HEK293 (cell line): ENCODE measurements at regions of chr22 and their contacts with region 1.

Region 1: DNA sequence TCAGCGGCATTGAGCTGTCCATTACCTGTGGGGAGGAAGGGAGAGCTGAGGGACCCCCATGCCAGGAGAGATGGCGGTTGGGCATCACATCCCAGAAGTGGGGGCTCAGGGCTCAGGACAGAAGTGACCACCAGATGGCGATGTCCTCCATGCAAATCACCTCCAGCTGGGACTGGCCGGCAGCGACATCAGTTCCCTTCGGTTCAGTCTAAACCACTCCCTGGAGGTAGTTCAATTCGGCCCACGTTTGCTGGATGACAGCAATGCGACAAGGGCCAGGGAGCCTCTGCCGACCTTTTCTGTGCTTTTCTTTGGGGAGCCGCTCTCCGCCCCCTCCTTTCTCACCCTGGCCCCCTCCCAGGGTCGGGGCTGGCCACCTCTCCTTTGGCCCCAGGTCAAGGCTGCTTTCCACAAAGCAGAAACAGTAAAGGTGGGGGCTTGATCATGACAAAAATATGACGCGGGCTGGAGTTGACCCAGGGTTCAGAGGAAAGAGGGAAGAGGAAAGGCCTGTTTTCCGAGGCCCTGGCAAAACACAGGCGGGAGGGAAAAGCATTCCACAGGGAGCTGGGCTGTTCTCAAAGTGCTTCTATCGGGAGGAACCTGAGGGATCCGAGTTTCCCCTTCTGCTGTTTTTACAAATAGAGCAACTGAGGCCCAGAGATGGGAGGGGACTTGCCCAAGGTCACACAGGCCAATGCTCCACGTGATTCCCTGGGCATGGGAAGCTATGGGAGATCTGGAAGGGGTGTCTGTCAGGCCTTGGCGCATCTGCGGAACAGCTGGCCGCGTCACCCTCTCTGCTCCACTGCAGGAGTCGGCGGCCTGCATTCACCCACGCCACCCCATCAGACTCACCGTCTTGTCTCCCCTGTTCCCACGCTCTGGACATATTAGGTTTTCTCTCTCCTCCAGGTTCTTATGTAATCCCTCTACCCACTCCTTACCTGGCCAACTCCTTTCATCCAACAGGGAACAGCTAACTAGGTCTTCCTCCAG is 54.7 kb downstream of the FBXO7 start:
- H3K4me3 ChIP-seq: no peak overlapping the region
- H3K27ac ChIP-seq: no peak overlapping the region
- H3K4me1 ChIP-seq: peaks cover 5% of the 10 kb centered on the region
- CTCF ChIP-seq: peak; percentile 86

Region 2: DNA sequence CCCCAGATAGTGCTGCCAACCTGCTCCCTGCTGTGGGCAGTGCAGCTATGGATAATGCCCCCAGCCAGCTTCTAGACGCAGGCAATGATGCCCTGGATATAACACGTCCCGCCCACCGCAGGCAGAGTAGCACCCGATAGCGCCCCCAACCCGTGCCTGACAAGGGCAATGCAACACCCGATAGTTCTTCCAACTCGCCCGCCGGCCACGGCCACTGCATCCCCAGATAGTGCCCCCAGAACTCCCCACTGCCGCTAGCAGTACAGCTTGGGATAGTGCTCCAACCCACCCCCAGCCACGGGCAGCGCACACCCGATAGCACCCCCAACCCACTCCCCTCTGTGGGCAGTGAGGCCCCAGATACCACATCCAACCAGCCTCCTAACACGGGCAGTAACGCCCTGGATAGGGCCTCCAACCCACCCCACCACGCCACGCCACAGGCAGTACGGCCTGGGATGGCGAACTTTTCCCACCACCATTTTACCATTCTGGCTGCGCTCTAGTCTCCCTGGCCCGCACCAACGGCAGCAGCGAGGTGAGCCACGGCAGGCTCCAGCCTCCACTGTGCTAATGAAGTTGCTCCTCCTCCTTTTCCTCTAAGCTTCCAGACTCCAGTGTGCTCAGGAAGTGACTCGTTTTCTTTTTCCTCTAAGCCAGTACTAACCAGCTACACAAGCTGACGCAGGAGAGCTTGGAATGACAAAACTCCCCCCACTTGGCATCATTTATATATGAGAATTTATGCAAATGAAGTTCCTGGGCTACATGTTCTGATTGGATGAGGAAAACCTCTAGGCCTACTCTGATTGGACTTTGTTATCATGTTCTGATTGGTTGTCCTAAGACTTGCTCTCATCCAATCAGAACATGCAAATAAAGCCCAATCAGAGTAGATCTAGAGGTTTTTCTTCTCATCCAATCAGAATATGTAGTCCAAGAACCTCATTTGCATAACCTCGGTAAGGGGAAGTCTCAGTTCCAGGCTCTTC is 174.6 kb before region 1 on chr22:
- CTCF ChIA-PET with region 1: no interaction called
- POLR2A ChIA-PET with region 1: no interaction called
- H3K4me3 ChIP-seq: no peak overlapping the region
- H3K27ac ChIP-seq: no peak overlapping the region
- H3K4me1 ChIP-seq: no peaks in the 10 kb centered on the region
- CTCF ChIP-seq: no peak

Region 3: DNA sequence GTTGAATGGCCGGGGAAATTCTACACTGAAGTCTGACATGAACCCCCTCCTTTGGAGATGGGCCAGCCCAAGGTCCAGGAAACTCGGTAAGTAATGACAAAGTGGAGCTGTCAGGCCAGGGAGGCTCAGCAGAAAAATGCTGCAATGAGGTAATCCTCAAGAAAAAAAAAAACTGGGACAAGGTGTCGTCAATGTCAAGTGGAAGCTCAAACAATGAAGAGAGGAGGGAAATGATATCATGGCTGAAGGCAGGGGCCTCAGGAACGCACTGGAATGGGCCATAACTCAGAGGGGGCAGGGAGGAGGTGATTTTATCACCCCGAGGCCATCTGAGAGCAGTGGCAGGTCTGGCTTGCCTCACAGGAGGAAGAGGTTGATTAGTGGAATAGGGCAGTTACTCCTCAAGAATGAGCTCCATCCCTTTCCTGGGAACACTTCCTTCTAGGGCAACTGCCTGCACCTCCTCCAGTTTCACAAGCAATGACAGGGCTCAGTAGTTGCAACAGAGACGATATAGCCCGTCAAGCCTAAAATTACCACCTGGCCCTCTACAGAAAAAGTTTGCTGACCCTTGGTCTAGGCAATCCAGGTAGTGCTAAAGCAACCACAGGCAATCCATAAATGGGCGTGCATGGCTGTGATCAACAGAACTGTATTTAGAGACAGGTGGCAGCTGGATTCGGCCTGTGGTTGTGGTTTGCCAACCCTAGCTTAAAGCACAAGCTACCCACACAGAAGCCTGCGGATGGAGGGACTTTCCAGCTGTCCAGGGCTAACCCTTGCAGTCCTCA is 10.5 kb after region 1 on chr22:
- CTCF ChIA-PET with region 1: interaction called, 21 read pairs
- POLR2A ChIA-PET with region 1: no interaction called
- H3K4me3 ChIP-seq: no peak overlapping the region
- H3K27ac ChIP-seq: no peak overlapping the region
- H3K4me1 ChIP-seq: peaks cover 2% of the 10 kb centered on the region
- CTCF ChIP-seq: no peak

Region 4: DNA sequence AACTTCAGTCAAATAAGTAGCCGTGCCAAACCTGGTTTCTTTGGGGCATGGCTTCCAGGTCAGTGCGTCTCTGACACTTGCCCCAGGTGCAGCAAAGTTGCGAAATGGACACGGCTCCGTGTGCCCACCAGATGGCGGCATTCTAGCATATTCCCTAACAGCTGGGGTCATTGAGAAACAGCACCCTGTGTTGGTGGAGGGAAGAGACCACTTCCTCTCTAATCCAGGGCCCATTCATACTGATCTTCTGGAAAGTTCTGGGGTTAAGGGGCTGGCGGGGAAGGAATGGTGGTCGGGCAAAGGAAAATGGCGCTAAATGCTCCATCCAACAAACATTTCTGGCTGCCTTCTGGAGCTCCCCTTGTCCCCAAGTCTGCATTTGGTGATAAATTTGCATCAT is 131.0 kb after region 1 on chr22:
- CTCF ChIA-PET with region 1: interaction called, 52 read pairs
- POLR2A ChIA-PET with region 1: no interaction called
- H3K4me3 ChIP-seq: no peak overlapping the region
- H3K27ac ChIP-seq: no peak overlapping the region
- H3K4me1 ChIP-seq: no peaks in the 10 kb centered on the region
- CTCF ChIP-seq: peak; percentile 67

Region 5: DNA sequence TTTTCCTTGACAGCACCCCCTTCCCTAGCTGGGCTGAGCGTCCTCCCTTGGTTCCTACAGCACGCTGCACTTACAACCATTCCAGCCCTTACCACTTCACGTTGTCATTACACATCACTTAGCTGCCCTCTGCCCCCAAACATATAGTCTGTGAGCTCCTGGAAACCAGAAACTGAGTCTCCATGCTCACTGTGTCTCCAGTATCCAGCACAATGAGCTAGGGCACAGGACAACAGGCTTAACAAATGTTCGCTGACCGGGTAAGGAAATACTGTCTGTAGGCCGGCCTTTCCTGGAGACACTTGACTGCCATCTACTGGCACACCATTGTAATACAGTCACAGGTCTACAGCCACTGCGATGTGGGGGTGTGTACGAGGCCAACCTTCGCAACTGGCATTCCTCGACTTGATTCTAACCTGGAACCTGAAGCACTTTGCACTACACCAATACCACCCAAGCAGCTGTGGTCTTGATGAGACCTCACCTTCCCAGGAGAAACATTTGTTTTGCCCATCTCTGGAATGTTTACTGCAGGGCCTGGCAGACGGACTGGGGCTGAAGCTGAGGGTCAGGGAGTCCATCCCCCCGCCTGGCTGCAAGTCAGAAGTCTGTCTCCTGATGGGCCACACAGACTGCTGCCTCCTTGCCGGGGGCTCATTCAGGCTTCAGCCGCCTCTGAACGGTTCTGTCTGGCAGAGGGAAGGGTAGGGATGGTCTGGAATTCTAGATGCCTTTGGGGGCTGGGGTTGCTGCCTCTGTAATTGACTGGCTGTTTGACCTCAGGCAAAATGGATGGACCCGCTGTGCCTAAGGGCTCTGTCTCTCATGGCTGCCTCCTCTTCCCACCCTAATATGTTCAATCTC is 456.8 kb after region 1 on chr22:
- CTCF ChIA-PET with region 1: interaction called, 24 read pairs
- POLR2A ChIA-PET with region 1: no interaction called
- H3K4me3 ChIP-seq: no peak overlapping the region
- H3K27ac ChIP-seq: no peak overlapping the region
- H3K4me1 ChIP-seq: no peaks in the 10 kb centered on the region
- CTCF ChIP-seq: peak; percentile 75

Region 6: DNA sequence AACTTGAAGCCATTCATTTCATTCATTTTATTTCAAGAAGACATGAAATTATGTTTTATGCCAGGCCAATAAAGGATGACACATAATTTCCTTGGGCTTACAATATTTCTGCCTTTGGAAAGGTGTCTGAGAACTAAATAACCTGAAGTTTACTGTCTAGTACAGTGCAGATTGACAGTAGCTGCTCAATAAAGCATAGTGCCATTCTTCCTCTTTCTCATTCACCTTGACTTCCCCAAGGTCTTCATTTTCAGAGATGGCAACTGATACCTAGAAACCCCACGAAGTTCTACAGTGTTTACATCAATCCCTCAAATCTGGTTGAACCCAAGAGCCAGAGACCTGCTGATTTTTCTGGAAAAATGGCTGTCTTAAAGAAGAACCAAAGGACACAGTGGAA is 673.2 kb after region 1 on chr22:
- CTCF ChIA-PET with region 1: interaction called, 12 read pairs
- POLR2A ChIA-PET with region 1: no interaction called
- H3K4me3 ChIP-seq: no peak overlapping the region
- H3K27ac ChIP-seq: no peak overlapping the region
- H3K4me1 ChIP-seq: no peaks in the 10 kb centered on the region
- CTCF ChIP-seq: no peak